Naive thymus-derived CD4-positive, alpha-beta T cell (primary cell): ENCODE measurements at regions of chr2 and their contacts with region 1.

Region 1: GRCh38 chr2:231706731-231707624 is 1.3 kb upstream of the PTMA start:
- DNase-seq: peak; percentile 96 to 99 (median 97)
- ATAC-seq: peak; percentile 62
- H3K4me3 ChIP-seq: peak overlapping the region; percentile 78
- H3K4me3 Mint-ChIP-seq: peak overlapping the region; percentile 95 to 99 (median 97)
- H3K27ac ChIP-seq: peak overlapping the region; percentile 100
- H3K27ac Mint-ChIP-seq: peak overlapping the region; percentile 100
- H3K4me1 ChIP-seq: peaks cover 19 to 21% of the 10 kb centered on the region in 2 donors
- H3K4me1 Mint-ChIP-seq: peaks cover 11 to 34% (median 23%) of the 10 kb centered on the region in 7 donors
- H3K27me3 ChIP-seq: no peaks in the 10 kb centered on the region
- H3K27me3 Mint-ChIP-seq: peaks cover 0 to 6% (median 0%) of the 10 kb centered on the region in 5 donors

Region 2: DNA sequence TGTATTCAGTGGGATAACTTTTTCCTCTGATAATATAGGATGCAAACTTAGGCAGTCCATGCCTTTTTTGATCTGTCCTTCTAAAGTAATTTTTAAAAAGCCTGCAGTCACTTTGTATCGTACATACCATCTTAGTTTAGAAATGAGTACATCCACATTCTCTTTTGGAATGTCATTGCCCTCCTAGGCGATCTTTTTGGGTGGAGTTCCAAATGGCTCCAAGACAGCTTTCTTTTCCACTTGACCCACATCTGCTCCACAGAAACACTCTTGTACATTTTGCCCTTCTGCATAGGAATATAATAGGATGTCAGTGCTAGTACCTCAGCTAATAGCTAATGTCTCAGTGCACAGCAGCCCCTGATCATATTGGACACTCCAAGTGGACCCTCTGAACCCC is 560.3 kb before region 1 on chr2:
- CTCF ChIA-PET with region 1: no interaction called
- POLR2A ChIA-PET with region 1: no interaction called
- intact Hi-C with region 1: no loop called
- DNase-seq: no peak
- ATAC-seq: no peak
- H3K4me3 ChIP-seq: no peak overlapping the region
- H3K4me3 Mint-ChIP-seq: no peak overlapping the region
- H3K27ac ChIP-seq: no peak overlapping the region
- H3K27ac Mint-ChIP-seq: no peak overlapping the region
- H3K4me1 ChIP-seq: no peaks in the 10 kb centered on the region
- H3K4me1 Mint-ChIP-seq: no peaks in the 10 kb centered on the region
- H3K27me3 ChIP-seq: no peaks in the 10 kb centered on the region
- H3K27me3 Mint-ChIP-seq: no peaks in the 10 kb centered on the region

Region 3: GRCh38 chr2:231463698-231464575 is 243.0 kb before region 1 on chr2 and contains the start of gene NCL:
- CTCF ChIA-PET with region 1: no interaction called
- POLR2A ChIA-PET with region 1: interaction called, 53 read pairs
- intact Hi-C with region 1: loop called (anchors 1 kb)
- DNase-seq: peak; percentile 75 to 96 (median 91)
- ATAC-seq: peak; percentile 73
- H3K4me3 ChIP-seq: peak within 1 kb of the TSS; percentile 65
- H3K4me3 Mint-ChIP-seq: peak within 1 kb of the TSS; percentile 90 to 99 (median 95)
- H3K27ac ChIP-seq: peak within 1 kb of the TSS; percentile 96
- H3K27ac Mint-ChIP-seq: peak within 1 kb of the TSS; percentile 96 to 100 (median 100)
- H3K4me1 ChIP-seq: peaks cover 26 to 28% of the 10 kb centered on the region in 2 donors
- H3K4me1 Mint-ChIP-seq: peaks cover 39 to 65% (median 44%) of the 10 kb centered on the region in 7 donors
- H3K27me3 ChIP-seq: no peaks in the 10 kb centered on the region
- H3K27me3 Mint-ChIP-seq: no peaks in the 10 kb centered on the region
- total RNA-seq, gene NCL: 411 to 647 (median 426) TPM

Region 4: GRCh38 chr2:231604685-231605606 is 102.0 kb before region 1 on chr2:
- CTCF ChIA-PET with region 1: interaction called, 6 read pairs
- POLR2A ChIA-PET with region 1: interaction called, 52 read pairs
- intact Hi-C with region 1: loop called (anchors 1 kb)
- DNase-seq: peak; percentile 80 to 97 (median 88)
- ATAC-seq: peak; percentile 89
- H3K4me3 ChIP-seq: peak overlapping the region; percentile 36
- H3K4me3 Mint-ChIP-seq: peak overlapping the region; percentile 58 to 77 (median 72)
- H3K27ac ChIP-seq: peak overlapping the region; percentile 89
- H3K27ac Mint-ChIP-seq: peak overlapping the region in 8 of 9 donors; percentile 50 to 93 (median 90)
- H3K4me1 ChIP-seq: peaks cover 0 to 9% of the 10 kb centered on the region in 2 donors
- H3K4me1 Mint-ChIP-seq: peaks cover 0 to 14% (median 4%) of the 10 kb centered on the region in 7 donors
- H3K27me3 ChIP-seq: no peaks in the 10 kb centered on the region
- H3K27me3 Mint-ChIP-seq: peaks cover 0 to 9% (median 0%) of the 10 kb centered on the region in 5 donors

Region 5: GRCh38 chr2:231655897-231656296 is 51.1 kb before region 1 on chr2:
- CTCF ChIA-PET with region 1: interaction called, 8 read pairs
- POLR2A ChIA-PET with region 1: interaction called, 241 read pairs
- intact Hi-C with region 1: no loop called
- DNase-seq: no peak
- ATAC-seq: no peak
- H3K4me3 ChIP-seq: no peak overlapping the region
- H3K4me3 Mint-ChIP-seq: no peak overlapping the region
- H3K27ac ChIP-seq: no peak overlapping the region
- H3K27ac Mint-ChIP-seq: no peak overlapping the region
- H3K4me1 ChIP-seq: no peaks in the 10 kb centered on the region
- H3K4me1 Mint-ChIP-seq: peaks cover 0 to 8% (median 0%) of the 10 kb centered on the region in 7 donors
- H3K27me3 ChIP-seq: no peaks in the 10 kb centered on the region
- H3K27me3 Mint-ChIP-seq: no peaks in the 10 kb centered on the region

Region 6: DNA sequence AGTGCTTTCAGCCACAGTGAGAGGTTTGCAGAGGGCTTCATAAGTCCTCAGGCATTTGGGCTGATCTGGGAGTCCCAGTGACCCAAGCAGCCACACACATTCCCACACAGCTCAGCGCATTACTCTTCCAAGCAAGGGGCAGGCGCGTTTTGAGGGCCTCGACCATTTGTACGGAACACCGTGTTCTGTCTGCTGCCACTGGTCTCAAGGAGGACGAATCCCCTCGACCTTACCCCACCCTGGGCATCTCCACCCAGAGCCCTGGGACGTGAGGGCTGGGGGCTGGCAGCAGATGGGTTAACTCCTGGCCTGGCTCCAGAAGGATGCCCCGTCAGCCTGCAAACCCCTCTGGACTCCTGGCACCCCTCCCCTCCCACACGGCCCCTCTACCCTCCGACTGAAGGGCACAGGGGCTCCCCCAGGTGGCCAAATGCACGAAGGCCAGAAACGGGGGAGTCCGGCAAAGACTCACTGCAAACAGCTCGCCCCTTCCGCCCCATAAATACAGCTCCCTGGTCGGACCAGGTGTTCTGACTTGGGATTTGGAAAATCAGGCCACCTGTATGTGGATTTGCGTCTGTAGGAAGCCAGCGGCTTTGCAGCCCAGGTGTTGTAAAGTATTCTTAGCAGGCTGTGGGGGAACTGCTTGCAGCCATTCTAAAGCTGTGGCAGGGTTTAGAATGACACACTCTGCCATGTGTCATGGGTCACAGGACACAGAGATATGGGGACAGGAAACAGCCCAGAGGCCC is 32.2 kb before region 1 on chr2:
- CTCF ChIA-PET with region 1: interaction called, 475 read pairs
- POLR2A ChIA-PET with region 1: interaction called, 77 read pairs
- intact Hi-C with region 1: loop called in 1 of 2 experiments (anchors 1 kb)
- DNase-seq: peak in 7 of 9 donors; percentile 30 to 70 (median 46)
- ATAC-seq: peak; percentile 74
- H3K4me3 ChIP-seq: no peak overlapping the region
- H3K4me3 Mint-ChIP-seq: no peak overlapping the region
- H3K27ac ChIP-seq: no peak overlapping the region
- H3K27ac Mint-ChIP-seq: peak overlapping the region in 1 of 9 donors; percentile 60
- H3K4me1 ChIP-seq: peaks cover 0 to 3% of the 10 kb centered on the region in 2 donors
- H3K4me1 Mint-ChIP-seq: peaks cover 5 to 43% (median 8%) of the 10 kb centered on the region in 7 donors
- H3K27me3 ChIP-seq: no peaks in the 10 kb centered on the region
- H3K27me3 Mint-ChIP-seq: peaks cover 0 to 4% (median 0%) of the 10 kb centered on the region in 5 donors

Region 7: GRCh38 chr2:231786177-231786916 is 79.4 kb after region 1 on chr2 and contains the start of gene COPS7B:
- CTCF ChIA-PET with region 1: interaction called, 3 read pairs
- POLR2A ChIA-PET with region 1: interaction called, 3 read pairs
- intact Hi-C with region 1: loop called (anchors 1 kb)
- DNase-seq: peak; percentile 62 to 87 (median 76)
- ATAC-seq: peak; percentile 77
- H3K4me3 ChIP-seq: peak within 1 kb of the TSS; percentile 88
- H3K4me3 Mint-ChIP-seq: peak within 1 kb of the TSS; percentile 85 to 95 (median 92)
- H3K27ac ChIP-seq: peak within 1 kb of the TSS; percentile 82
- H3K27ac Mint-ChIP-seq: peak within 1 kb of the TSS; percentile 48 to 95 (median 83)
- H3K4me1 ChIP-seq: peaks cover 24 to 31% of the 10 kb centered on the region in 2 donors
- H3K4me1 Mint-ChIP-seq: peaks cover 50 to 93% (median 85%) of the 10 kb centered on the region in 7 donors
- H3K27me3 ChIP-seq: no peaks in the 10 kb centered on the region
- H3K27me3 Mint-ChIP-seq: no peaks in the 10 kb centered on the region
- total RNA-seq, gene COPS7B: 33.4 to 60.6 (median 50.6) TPM

Region 8: GRCh38 chr2:232611551-232612218 is 904.7 kb after region 1 on chr2:
- CTCF ChIA-PET with region 1: no interaction called
- POLR2A ChIA-PET with region 1: no interaction called
- intact Hi-C with region 1: no loop called
- DNase-seq: peak; percentile 18 to 72 (median 48)
- ATAC-seq: peak; percentile 72
- H3K4me3 ChIP-seq: no peak overlapping the region
- H3K4me3 Mint-ChIP-seq: no peak overlapping the region
- H3K27ac ChIP-seq: no peak overlapping the region
- H3K27ac Mint-ChIP-seq: no peak overlapping the region
- H3K4me1 ChIP-seq: no peaks in the 10 kb centered on the region
- H3K4me1 Mint-ChIP-seq: no peaks in the 10 kb centered on the region
- H3K27me3 ChIP-seq: no peaks in the 10 kb centered on the region
- H3K27me3 Mint-ChIP-seq: no peaks in the 10 kb centered on the region

Region 9: DNA sequence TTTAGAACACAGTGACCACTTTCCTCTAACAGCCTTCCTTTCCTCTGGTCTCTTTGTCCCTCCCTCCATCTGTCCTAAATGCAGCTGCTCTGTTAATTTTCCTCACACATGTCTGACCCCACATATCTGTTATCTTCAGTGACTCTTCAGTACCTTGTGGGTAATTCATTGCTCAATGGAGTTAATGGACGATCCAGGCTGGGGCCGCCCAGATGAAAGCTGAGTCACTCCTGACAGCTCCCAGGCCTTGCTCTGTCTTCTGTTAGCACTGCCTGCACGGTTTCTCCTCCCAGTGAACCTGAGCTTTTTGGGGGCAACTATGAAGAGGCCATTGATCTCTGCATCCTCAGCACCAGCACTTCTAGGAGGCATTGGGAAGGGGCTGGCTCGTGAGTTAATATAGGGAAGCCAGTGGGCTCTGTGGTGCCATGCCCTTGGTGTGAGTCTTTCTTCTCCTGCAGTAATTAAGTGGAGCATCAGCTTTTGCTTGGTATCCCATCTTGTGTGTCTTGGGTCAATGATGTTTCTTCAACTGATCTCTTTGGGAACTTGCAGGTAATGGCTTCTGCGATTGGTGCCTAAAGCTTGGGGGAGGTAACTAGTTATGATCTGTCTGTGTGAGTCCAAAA is 1230.4 kb after region 1 on chr2:
- CTCF ChIA-PET with region 1: no interaction called
- POLR2A ChIA-PET with region 1: no interaction called
- intact Hi-C with region 1: no loop called
- DNase-seq: no peak
- ATAC-seq: no peak
- H3K4me3 ChIP-seq: no peak overlapping the region
- H3K4me3 Mint-ChIP-seq: no peak overlapping the region
- H3K27ac ChIP-seq: no peak overlapping the region
- H3K27ac Mint-ChIP-seq: no peak overlapping the region
- H3K4me1 ChIP-seq: no peaks in the 10 kb centered on the region
- H3K4me1 Mint-ChIP-seq: no peaks in the 10 kb centered on the region
- H3K27me3 ChIP-seq: no peaks in the 10 kb centered on the region
- H3K27me3 Mint-ChIP-seq: peaks cover 8 to 23% (median 20%) of the 10 kb centered on the region in 5 donors